Naive thymus-derived CD4-positive, alpha-beta T cell (primary cell): ENCODE measurements at regions of chrX and their contacts with region 1.

Region 1: DNA sequence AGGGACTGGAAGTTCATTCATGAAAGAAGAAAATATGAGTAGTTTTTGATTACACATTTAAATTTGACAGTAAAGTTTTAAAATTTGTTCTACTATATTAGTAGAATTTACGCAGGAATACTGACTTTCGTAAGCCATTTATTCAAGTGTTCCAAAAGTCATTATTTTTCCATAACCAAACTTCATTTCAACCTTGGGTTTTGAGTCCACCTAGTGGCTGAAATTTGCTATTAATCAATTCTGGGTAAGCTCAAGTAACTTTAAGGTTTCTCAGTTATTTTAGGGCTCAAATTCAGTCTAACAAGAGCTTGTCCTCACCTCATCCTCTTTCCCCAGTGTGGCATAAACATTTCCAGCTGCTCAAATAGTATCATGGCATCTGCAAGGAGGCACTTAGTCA is 175.4 kb downstream of the SH3BGRL start:
- DNase-seq: peak in 3 of 9 donors; percentile 0 to 7 (median 3)
- ATAC-seq: no peak
- H3K4me3 ChIP-seq: no peak overlapping the region
- H3K4me3 Mint-ChIP-seq: no peak overlapping the region
- H3K27ac ChIP-seq: no peak overlapping the region
- H3K27ac Mint-ChIP-seq: no peak overlapping the region
- H3K4me1 ChIP-seq: no peaks in the 10 kb centered on the region
- H3K4me1 Mint-ChIP-seq: no peaks in the 10 kb centered on the region
- H3K27me3 ChIP-seq: no peaks in the 10 kb centered on the region
- H3K27me3 Mint-ChIP-seq: peaks cover 4 to 23% (median 11%) of the 10 kb centered on the region in 5 donors

Region 2: DNA sequence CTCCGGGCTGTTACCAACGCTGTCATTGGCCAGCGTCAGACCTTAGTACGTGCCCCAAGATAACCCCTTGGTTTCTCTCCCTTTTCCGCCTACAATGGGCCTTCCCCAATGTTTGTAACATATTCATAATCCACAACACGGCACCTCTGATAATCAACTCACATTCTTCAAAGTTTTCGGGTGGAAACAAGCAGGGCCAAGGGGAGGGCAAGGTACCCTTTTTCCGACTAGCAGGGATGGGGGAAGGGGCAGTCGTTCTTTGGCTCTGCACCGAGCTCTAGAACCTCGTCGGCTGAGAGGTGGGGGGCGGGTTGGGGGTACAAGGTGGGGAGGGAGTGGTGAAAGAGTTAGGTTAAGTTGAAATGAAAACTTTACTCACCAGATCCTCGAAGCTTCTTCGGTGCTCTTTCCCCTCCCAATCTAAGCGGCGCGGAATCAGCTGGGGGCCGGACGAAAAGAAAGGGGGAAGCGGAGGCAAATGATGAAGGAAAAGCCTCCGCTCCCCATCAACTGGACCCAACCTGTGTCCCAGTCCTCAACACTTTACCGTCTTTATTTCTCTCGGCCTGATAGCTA is 569.1 kb before region 1 on chrX:
- CTCF ChIA-PET with region 1: no interaction called
- POLR2A ChIA-PET with region 1: no interaction called
- intact Hi-C with region 1: loop called in 1 of 2 experiments (anchors 10 kb)
- DNase-seq: peak; percentile 54 to 82 (median 75)
- ATAC-seq: peak; percentile 72
- H3K4me3 ChIP-seq: peak overlapping the region; percentile 90
- H3K4me3 Mint-ChIP-seq: peak overlapping the region; percentile 81 to 96 (median 94)
- H3K27ac ChIP-seq: peak overlapping the region; percentile 88
- H3K27ac Mint-ChIP-seq: peak overlapping the region; percentile 72 to 99 (median 96)
- H3K4me1 ChIP-seq: peaks cover 8 to 21% of the 10 kb centered on the region in 2 donors
- H3K4me1 Mint-ChIP-seq: peaks cover 5 to 53% (median 32%) of the 10 kb centered on the region in 7 donors
- H3K27me3 ChIP-seq: no peaks in the 10 kb centered on the region
- H3K27me3 Mint-ChIP-seq: peaks cover 0 to 4% (median 0%) of the 10 kb centered on the region in 5 donors

Region 3: GRCh38 chrX:80876877-80877276 is 500.5 kb before region 1 on chrX:
- CTCF ChIA-PET with region 1: no interaction called
- POLR2A ChIA-PET with region 1: no interaction called
- intact Hi-C with region 1: loop called in 1 of 2 experiments (anchors 2 kb)
- DNase-seq: peak in 5 of 9 donors; percentile 2 to 36 (median 23)
- ATAC-seq: no peak
- H3K4me3 ChIP-seq: no peak overlapping the region
- H3K4me3 Mint-ChIP-seq: no peak overlapping the region
- H3K27ac ChIP-seq: no peak overlapping the region
- H3K27ac Mint-ChIP-seq: no peak overlapping the region
- H3K4me1 ChIP-seq: no peaks in the 10 kb centered on the region
- H3K4me1 Mint-ChIP-seq: no peaks in the 10 kb centered on the region
- H3K27me3 ChIP-seq: no peaks in the 10 kb centered on the region
- H3K27me3 Mint-ChIP-seq: no peaks in the 10 kb centered on the region

Region 4: DNA sequence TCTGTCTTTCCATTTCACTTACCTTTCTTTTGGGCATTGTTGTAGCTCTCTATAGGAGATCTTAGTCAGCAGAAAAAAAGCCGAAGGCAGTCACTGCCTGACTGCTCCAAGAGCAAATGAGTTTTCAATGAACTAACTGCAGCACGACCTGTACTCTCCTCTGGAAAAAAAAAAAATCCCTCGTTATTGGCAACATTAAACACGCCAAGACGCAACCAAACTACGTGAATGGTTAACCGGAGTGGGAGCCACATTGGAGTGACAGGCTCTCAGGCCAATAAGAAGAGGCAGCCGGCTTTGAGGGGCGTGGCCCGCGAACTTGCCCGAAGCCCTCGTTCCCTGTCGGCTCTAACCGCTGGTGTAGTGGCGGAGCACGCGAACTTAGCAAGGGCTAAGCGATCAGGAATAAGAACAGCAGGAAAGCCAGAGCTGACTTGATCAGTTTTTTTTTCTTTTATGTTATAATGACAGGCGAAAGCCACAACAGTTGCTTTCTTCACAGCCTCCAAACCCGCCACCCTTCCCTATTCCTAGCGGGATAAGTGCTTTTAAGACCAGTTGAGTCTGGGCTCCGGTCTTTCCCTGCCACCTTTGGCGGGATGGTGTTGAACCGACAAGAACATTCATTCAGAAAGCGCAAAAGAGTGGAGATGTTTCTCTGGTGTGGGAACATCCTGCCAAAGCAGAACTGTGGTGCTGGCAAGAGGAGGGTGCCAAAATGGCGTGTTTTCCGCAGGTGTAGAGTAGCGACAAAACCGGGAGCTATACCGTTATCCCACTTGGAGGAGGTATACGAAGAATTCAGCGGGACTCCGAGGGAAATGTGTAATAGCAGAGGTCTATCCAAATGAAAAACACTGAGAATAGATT is 255.6 kb before region 1 on chrX:
- CTCF ChIA-PET with region 1: no interaction called
- POLR2A ChIA-PET with region 1: no interaction called
- intact Hi-C with region 1: loop called (anchors 5 kb)
- DNase-seq: peak; percentile 71 to 87 (median 84)
- ATAC-seq: peak; percentile 97
- H3K4me3 ChIP-seq: peak overlapping the region; percentile 77
- H3K4me3 Mint-ChIP-seq: peak overlapping the region; percentile 85 to 98 (median 93)
- H3K27ac ChIP-seq: peak overlapping the region; percentile 52
- H3K27ac Mint-ChIP-seq: peak overlapping the region; percentile 63 to 90 (median 77)
- H3K4me1 ChIP-seq: no peaks in the 10 kb centered on the region
- H3K4me1 Mint-ChIP-seq: peaks cover 0 to 17% (median 6%) of the 10 kb centered on the region in 7 donors
- H3K27me3 ChIP-seq: no peaks in the 10 kb centered on the region
- H3K27me3 Mint-ChIP-seq: peaks cover 0 to 21% (median 0%) of the 10 kb centered on the region in 5 donors

Region 5: GRCh38 chrX:81174286-81174685 is 203.0 kb before region 1 on chrX:
- CTCF ChIA-PET with region 1: interaction called, 3 read pairs
- POLR2A ChIA-PET with region 1: no interaction called
- intact Hi-C with region 1: loop called in 1 of 2 experiments (anchors 1 kb)
- DNase-seq: peak in 5 of 9 donors; percentile 5 to 21 (median 8)
- ATAC-seq: peak; percentile 50
- H3K4me3 ChIP-seq: no peak overlapping the region
- H3K4me3 Mint-ChIP-seq: no peak overlapping the region
- H3K27ac ChIP-seq: no peak overlapping the region
- H3K27ac Mint-ChIP-seq: no peak overlapping the region
- H3K4me1 ChIP-seq: no peaks in the 10 kb centered on the region
- H3K4me1 Mint-ChIP-seq: peaks cover 0 to 7% (median 0%) of the 10 kb centered on the region in 7 donors
- H3K27me3 ChIP-seq: no peaks in the 10 kb centered on the region
- H3K27me3 Mint-ChIP-seq: no peaks in the 10 kb centered on the region

Region 6: DNA sequence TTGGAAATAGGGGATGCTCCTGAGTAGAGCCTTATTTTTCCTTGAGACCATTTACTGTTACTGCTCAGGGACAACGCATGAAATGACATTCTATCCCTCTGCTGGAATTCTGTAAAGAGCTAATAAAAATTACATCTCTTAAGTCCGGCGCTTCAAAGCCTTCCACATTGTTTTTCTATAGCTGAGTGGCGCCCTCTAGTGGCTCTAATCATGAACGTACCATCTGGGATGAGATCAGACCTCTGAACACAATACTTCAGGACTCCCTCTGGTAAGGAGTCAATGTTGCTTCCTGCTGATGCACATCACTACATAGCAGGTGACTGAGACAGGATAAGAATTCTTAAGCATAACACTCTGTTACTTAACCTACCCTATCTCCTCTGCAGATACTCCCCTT is 181.6 kb before region 1 on chrX:
- CTCF ChIA-PET with region 1: no interaction called
- POLR2A ChIA-PET with region 1: no interaction called
- intact Hi-C with region 1: loop called in 1 of 2 experiments (anchors 5 kb)
- DNase-seq: peak in 8 of 9 donors; percentile 14 to 55 (median 40)
- ATAC-seq: peak; percentile 80
- H3K4me3 ChIP-seq: no peak overlapping the region
- H3K4me3 Mint-ChIP-seq: no peak overlapping the region
- H3K27ac ChIP-seq: no peak overlapping the region
- H3K27ac Mint-ChIP-seq: peak overlapping the region in 1 of 9 donors; percentile 7
- H3K4me1 ChIP-seq: no peaks in the 10 kb centered on the region
- H3K4me1 Mint-ChIP-seq: peaks cover 0 to 25% (median 15%) of the 10 kb centered on the region in 7 donors
- H3K27me3 ChIP-seq: no peaks in the 10 kb centered on the region
- H3K27me3 Mint-ChIP-seq: no peaks in the 10 kb centered on the region

Region 7: DNA sequence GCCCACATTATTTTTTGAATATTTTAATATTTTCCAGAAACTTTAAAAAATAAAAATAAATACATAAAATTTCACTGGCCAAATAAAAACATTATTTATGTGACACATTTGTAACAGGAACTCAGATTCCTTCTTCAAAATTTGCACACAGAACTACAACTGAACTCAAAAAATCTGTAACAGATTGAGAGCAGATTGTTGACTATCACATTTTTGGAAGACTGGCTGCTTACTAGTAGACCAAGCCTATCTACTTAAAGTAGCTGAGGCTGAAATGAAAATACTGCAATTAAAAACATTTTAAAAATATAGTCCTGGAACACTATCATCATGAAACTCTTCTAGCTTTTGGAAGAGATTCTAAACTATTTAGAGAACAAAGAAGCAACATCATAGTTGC is 28.5 kb after region 1 on chrX:
- CTCF ChIA-PET with region 1: no interaction called
- POLR2A ChIA-PET with region 1: no interaction called
- intact Hi-C with region 1: no loop called
- DNase-seq: no peak
- ATAC-seq: no peak
- H3K4me3 ChIP-seq: no peak overlapping the region
- H3K4me3 Mint-ChIP-seq: no peak overlapping the region
- H3K27ac ChIP-seq: no peak overlapping the region
- H3K27ac Mint-ChIP-seq: no peak overlapping the region
- H3K4me1 ChIP-seq: no peaks in the 10 kb centered on the region
- H3K4me1 Mint-ChIP-seq: no peaks in the 10 kb centered on the region
- H3K27me3 ChIP-seq: no peaks in the 10 kb centered on the region
- H3K27me3 Mint-ChIP-seq: no peaks in the 10 kb centered on the region

Region 8: GRCh38 chrX:82721891-82722290 is 1344.6 kb after region 1 on chrX:
- CTCF ChIA-PET with region 1: no interaction called
- POLR2A ChIA-PET with region 1: no interaction called
- intact Hi-C with region 1: no loop called
- DNase-seq: no peak
- ATAC-seq: no peak
- H3K4me3 ChIP-seq: no peak overlapping the region
- H3K4me3 Mint-ChIP-seq: no peak overlapping the region
- H3K27ac ChIP-seq: no peak overlapping the region
- H3K27ac Mint-ChIP-seq: no peak overlapping the region
- H3K4me1 ChIP-seq: no peaks in the 10 kb centered on the region
- H3K4me1 Mint-ChIP-seq: no peaks in the 10 kb centered on the region
- H3K27me3 ChIP-seq: no peaks in the 10 kb centered on the region
- H3K27me3 Mint-ChIP-seq: no peaks in the 10 kb centered on the region